GM18951 (cell line): ENCODE measurements at regions of chr3 and their contacts with region 1.

Region 1: DNA sequence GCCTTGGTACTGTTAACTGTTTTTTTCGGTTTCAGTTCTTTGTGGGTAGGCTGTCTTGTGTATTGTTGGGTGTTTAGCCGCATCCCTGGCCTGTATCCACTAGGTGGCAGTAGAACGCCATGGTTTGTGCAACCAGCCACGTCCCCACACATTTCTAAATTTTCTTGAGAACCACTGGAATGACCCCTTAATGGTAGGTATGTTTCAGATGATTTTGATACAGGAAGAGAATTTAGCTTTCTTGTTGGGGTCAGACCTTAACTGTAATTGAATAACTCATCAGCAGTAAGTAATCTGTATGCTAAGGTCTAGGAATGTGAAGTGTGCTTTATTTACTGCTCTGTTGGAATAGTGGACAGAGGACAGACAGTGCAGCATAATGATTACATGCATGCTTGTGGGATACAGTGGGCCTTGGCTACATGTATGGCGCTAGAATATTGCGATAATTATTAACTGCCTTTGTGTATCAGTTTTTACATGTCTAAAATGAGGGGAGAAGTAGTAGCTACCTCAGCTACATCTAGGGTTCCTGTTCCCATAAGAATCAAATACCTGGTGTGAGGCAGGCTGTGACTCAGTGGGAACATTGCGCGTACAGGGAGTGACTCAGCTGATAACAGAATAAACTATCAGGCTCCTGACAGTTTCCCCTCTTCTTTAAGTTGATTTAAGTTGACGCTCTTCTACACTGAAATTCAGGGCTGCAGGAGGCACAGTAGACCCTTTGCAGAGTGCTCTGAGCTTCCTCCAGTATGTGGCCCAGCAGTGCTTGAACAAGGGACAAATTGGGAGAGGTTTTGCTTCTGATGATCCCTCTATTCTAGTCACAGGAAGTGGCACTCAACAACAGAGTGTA is 25.0 kb upstream of the GPR171 start:
- POLR2A ChIP-seq: no peak

Region 2: GRCh38 chr3:151168269-151169094 is 59.6 kb before region 1 on chr3:
- in situ Hi-C with region 1: loop called (anchors 5 kb)
- POLR2A ChIP-seq: no peak

Region 3: DNA sequence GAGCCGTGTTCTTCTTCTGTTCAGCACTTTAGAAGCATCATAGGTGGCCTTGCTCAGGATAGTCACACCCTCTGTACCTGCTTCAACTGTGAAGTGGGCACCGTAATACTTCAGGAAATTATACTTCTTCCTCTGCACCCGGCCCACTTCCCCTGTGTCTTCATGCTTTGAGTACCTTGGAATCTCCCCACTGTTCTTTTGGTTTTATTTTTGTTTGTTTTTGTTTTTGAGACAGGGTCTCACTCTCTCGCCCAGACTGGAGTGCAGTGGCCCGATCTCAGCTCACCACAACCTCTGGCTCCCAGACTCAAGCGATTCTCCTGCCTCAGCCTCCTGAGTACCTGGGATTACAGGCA is 48.6 kb after region 1 on chr3:
- in situ Hi-C with region 1: loop called (anchors 5 kb)
- POLR2A ChIP-seq: no peak

Region 4: GRCh38 chr3:151644020-151644620 is 416.1 kb after region 1 on chr3:
- in situ Hi-C with region 1: no loop called
- POLR2A ChIP-seq: no peak